ENCODE measurements at regions of chr11 and their contacts with region 1.

Region 1: DNA sequence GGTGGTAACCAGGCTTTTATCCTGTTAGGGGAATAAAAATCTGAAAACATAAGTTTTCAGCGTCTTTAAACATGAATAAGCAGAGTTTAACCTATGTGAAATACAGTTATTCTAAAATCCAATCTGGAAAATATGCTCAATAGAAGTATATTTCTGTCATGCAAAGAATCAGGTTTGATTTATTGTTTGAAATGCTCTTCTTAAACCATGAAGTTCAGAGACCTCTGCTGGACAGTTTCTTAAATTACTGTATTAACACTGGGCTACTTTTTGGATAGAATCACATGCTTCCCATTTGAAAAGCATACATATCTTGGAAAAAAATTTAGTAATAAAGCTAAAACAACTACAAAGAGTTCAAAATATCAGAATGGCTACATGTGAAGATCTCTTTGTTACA is 25.4 kb downstream of the APIP start:
- DNase-seq: no peak
- H3K4me3 ChIP-seq: no peak overlapping the region
- CTCF ChIP-seq: peak; percentile 13

Region 2: DNA sequence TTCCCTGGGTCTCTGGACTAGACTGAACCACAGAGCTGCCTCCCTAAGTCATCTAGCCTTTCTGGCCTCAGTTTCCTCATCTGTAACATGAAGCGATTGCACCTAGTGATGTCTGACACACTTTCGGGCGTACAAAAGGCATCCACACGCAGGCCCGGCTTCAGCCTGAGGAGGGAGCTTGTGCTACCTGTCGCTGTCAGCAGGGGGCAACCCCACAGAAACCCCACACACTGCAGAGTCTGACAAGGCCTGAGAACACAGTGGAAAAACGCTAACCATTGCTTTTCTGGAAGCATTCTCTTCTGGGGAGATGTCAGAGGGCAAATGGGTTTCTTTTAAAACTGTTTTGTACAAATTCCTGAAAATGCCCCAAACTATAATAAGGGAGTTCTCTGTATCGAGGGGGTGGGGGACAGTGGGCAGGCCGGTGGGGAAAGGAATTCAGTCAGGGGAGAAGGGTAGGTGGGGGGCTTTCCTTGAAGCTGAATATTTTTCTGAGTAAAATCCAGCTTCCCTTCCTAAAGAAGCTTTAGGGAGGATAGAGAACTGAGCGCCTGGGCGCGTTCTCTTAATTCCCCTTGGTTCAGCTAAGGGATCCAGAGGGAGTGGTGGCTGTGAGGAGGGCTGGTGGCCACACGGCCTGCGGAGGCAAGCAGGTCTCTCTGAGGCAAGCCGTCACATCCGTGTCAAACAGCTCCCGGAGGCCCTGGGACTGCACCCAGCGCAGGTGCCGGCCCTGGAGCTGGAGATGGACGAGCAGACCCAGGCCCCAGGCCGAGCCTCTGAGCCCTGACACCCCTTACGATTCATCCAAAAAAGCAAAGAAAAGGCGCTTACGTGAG is 377.8 kb before region 1 on chr11:
- CTCF ChIA-PET with region 1: interaction called, 82 read pairs
- POLR2A ChIA-PET with region 1: no interaction called
- DNase-seq: no peak
- H3K4me3 ChIP-seq: no peak overlapping the region
- CTCF ChIP-seq: peak; percentile 89

Region 3: DNA sequence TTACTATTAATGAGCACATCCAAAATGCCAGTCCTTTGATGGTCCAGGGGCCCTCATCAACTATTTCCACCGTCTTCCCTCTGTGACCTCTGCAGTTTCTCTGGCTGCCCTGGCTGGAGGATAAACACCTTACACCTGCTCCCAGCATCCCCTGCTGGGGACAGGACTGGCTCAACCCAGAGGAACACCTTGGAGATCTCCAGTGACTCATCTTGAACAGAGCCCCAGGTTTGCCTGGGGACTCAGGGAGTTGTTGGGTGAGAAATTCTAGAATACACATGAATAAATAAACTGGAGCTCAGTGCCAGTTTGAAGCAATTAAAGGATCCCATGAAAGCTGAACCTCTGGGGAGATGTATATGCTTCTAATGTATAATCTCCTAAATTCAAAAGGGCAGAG is 353.2 kb before region 1 on chr11:
- CTCF ChIA-PET with region 1: no interaction called
- POLR2A ChIA-PET with region 1: no interaction called
- DNase-seq: no peak
- H3K4me3 ChIP-seq: no peak overlapping the region
- CTCF ChIP-seq: no peak

Region 4: DNA sequence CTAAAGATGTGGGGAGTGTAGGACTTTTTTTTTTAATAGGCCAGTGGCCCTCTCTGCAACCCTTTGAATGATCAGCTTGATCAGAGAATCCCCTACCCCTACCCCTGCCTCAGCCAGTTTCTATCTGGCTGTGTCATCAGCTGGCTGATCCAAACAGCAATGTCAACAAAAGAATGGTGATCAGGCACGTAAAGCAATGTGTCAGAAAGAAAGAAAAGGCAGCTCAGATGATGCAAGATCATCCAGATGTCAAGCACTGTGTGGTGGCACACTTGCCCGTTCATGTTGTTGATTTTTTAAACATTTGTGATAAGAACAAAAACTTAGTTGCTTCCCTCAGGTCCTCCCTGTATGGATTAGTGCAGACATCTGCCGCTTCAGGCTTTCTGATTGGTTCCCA is 296.2 kb before region 1 on chr11:
- CTCF ChIA-PET with region 1: interaction called, 360 read pairs
- POLR2A ChIA-PET with region 1: no interaction called
- DNase-seq: no peak
- H3K4me3 ChIP-seq: no peak overlapping the region
- CTCF ChIP-seq: no peak

Region 5: DNA sequence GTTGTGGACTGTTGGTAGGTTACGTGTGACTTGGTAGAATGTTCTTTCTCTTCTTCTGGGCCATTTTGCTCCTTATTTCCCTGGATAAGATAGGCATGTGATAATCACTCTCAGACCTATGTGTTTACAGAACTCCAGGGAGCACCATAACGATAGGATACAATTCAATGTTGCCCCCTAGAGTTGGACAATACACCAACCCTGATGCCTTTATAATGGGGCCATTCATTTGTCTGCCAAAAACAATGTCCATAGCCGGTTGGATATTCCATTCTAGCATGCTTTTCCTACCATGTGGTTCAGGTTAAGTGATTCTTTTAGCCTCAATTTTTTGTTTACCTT is 35.1 kb before region 1 on chr11:
- CTCF ChIA-PET with region 1: no interaction called
- POLR2A ChIA-PET with region 1: no interaction called
- DNase-seq: no peak
- H3K4me3 ChIP-seq: no peak overlapping the region
- CTCF ChIP-seq: no peak

Region 6: GRCh38 chr11:34870548-34871196 is 20.1 kb before region 1 on chr11:
- CTCF ChIA-PET with region 1: interaction called, 15 read pairs
- POLR2A ChIA-PET with region 1: no interaction called
- DNase-seq: no peak
- H3K4me3 ChIP-seq: no peak overlapping the region
- CTCF ChIP-seq: no peak

Region 7: DNA sequence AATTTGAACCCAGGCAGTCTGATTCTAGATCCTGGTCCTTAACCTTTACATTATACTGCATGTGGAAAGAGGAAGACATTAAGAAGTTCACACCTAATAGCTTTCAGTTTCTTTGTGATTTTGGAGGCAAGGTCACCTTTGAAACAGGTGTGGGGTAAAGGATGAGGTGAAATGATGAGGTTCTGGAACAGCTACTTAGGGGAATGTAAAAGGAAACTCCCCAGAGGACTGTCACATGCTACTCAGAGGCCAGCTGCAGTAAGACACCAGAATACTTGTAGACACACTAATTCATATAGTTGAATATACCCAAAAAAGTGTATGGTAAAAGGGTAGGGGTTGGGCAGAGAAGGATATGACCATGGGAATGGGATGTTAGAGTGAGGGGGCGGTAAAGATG is 20.0 kb after region 1 on chr11:
- CTCF ChIA-PET with region 1: interaction called, 12 read pairs
- POLR2A ChIA-PET with region 1: no interaction called
- DNase-seq: no peak
- H3K4me3 ChIP-seq: no peak overlapping the region
- CTCF ChIP-seq: no peak